HEK293T (cell line): ENCODE measurements at regions of chr1 and their contacts with region 1.

Region 1: DNA sequence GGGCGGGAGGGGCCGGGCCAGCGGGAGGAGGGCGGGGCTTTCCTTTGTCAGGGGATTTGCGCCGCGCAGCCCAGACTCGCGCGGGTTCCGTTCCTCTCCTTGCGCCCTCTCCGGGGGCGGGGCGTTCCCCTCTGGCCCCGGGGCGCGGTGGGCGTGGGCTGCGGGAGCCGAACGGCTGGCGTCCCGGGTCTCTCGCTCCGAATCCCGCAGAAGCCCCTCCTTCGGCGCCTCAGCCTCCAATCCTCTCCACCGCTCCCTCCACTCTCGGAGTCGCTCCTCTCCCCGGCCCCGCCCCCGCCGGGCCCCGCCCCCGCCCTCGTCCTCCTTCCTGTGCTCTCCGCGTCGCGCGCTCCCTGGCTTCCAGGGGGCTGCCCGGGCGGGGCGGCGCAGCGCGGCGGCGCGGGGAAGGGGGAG is 82.8 kb upstream of the BMP8A start:
- DNase-seq: peak; percentile 98

Region 2: GRCh38 chr1:39387452-39387851 is 21.2 kb before region 1 on chr1:
- CTCF ChIA-PET with region 1: interaction called, 12 read pairs
- POLR2A ChIA-PET with region 1: interaction called, 4 read pairs
- DNase-seq: peak; percentile 22

Region 3: DNA sequence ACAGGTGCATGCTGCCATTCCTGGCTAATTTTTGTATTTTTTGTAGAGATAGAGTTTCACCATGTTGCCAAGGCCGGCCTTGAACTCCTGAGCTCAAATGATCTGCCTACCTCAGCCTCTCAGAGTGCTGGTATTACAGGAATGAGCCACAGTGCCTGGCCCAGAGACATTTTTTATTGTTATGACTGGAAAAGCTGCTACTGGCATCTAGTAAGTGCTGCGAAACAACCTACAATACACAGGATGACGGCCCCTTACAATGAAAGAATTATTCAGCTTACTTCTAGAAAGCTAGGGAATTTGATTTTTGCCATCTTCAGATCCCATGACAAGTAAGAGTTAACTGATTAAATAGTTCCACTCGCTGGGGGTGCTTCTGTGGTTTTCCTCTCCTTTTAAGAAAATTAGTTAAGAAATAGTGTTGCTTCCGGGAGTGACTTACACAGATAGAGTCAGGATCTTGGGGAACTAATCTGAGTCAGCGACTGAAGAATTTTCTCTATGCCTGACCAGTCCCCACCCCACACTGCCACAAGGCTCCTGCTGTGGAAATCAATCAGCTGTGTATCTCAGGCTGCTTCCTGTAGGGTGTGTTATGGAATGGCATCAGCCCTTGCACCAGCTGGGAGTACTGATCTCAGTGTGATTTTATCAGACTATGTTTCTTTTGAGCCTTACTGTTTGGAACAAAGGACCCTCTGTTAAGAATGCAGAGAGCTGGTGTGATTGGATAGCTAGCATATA is 10.2 kb before region 1 on chr1:
- CTCF ChIA-PET with region 1: interaction called, 10 read pairs
- POLR2A ChIA-PET with region 1: interaction called, 8 read pairs
- DNase-seq: peak; percentile 44

Region 4: DNA sequence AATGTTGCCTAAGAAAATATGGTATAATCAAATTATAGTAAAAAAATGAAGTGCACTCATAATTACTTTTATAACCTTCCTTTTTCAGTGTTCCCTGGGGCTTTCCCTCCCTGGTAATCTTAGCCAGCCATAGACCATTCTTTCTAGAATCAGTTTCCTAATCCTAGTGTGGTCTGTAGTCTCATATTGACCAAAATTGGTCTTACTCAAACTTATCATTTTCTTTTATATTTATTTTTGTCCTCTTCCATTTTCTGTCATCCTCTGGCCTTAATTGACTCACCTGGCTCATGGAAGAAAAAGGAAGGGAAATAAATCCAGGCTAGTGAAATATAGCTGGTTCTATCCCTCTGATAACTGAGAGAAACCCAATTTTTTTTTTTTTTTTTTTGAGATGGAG is 11.8 kb after region 1 on chr1:
- CTCF ChIA-PET with region 1: interaction called, 12 read pairs
- POLR2A ChIA-PET with region 1: interaction called, 7 read pairs
- DNase-seq: no peak

Region 5: DNA sequence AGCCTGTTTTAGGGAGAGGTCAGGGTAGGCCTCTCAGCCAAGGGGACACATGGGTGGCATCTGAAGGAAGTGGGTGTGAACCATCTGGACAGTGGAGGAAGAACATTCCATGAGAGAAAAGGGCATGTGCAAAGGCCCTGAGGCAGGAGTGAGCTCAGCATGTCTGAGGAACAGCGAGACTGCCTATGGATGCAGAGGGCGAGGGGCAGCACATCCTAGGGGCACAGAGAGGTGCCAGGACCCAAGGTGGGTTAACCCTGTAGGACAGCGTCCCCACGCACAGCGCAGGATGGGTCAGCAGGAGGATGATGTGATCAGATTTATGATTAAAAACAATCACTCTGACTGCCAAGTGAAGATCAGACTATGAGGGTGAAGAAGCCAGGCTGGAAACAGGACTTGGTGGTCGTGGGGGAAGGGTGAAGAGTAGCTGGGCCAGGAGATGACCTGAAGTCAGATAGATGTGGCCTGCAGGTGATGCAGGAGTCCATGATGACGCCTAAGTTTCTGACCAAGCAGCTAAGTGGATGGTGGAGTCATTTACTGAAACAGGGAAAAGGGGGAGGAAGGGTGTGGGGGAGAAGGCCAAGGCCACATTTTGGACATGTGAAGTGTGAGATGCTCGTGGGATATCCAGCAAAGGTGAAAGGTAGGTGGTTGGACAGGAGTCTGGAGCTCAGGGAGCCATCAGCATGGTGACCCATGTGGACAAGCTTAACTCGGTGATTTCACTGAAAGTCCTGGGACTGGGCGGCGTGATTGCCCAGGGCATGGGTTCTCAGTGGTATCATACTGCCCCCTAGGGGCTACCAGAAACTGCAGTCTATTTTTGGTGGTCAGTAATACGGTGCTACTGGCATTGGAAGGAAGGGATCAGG is 130.2 kb after region 1 on chr1:
- CTCF ChIA-PET with region 1: interaction called, 11 read pairs
- POLR2A ChIA-PET with region 1: no interaction called
- DNase-seq: peak; percentile 85

Region 6: DNA sequence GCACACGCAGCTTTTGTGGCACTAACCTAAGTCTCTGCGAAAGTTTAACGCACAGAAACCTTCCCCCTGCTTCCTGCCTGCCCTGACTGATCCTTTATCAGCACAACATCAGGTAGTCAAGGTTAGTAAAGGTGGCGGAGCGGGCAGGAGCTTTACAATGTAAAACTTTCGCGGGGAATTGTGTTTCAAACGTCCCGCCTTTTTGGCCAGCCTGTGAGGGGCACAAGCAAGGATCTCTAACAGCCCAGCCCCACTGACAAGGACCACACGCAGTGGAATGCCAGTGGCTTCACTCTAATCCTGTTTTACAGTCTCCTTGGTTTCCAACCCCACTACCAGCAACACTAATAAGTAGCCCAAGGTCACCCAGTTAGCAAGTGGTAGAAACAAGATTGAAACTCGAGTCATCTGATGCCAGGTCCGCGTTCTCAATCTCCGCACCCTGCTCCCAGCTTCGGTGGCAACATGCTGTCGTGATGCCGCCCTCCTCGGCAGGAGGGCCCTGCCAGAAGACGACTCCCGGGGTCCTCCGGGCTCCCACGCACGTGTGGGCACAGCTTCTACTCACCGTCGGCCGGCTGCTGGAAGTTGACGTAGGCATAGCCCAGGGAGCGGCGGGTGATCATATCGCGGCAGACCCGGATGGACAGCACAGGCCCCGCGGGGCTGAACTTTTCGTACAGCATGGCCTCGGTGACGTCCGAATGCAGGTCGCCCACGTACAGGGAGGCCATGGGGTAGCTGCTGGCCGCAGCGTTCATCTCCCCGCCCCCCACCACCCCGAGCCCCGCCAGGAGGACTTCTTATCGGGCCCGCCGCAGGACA is 166.8 kb after region 1 on chr1:
- CTCF ChIA-PET with region 1: interaction called, 11 read pairs
- POLR2A ChIA-PET with region 1: no interaction called
- DNase-seq: no peak